ENCODE measurements at regions of chr17 and their contacts with region 1.

Region 1: GRCh38 chr17:17496189-17497064 is at the start of gene RASD1:
- DNase-seq: peak; percentile 81
- ATAC-seq: peak; percentile 88
- H3K4me3 Mint-ChIP-seq: peak within 1 kb of the TSS; percentile 80
- H3K27ac Mint-ChIP-seq: no peak within 1 kb of the TSS
- H3K4me1 Mint-ChIP-seq: peaks cover 17% of the 10 kb centered on the region
- H3K27me3 Mint-ChIP-seq: peaks cover 8% of the 10 kb centered on the region
- CTCF ChIP-seq: peak; percentile 67
- total RNA-seq, gene RASD1: 0.86 and 1.0 TPM in 2 replicates

Region 2: GRCh38 chr17:17425591-17425990 is 70.8 kb before region 1 on chr17:
- CTCF ChIA-PET with region 1: no interaction called
- POLR2A ChIA-PET with region 1: no interaction called
- intact Hi-C with region 1: no loop called
- DNase-seq: no peak
- ATAC-seq: no peak
- H3K4me3 Mint-ChIP-seq: no peak overlapping the region
- H3K27ac Mint-ChIP-seq: no peak overlapping the region
- H3K4me1 Mint-ChIP-seq: no peaks in the 10 kb centered on the region
- H3K27me3 Mint-ChIP-seq: no peaks in the 10 kb centered on the region
- CTCF ChIP-seq: no peak

Region 3: DNA sequence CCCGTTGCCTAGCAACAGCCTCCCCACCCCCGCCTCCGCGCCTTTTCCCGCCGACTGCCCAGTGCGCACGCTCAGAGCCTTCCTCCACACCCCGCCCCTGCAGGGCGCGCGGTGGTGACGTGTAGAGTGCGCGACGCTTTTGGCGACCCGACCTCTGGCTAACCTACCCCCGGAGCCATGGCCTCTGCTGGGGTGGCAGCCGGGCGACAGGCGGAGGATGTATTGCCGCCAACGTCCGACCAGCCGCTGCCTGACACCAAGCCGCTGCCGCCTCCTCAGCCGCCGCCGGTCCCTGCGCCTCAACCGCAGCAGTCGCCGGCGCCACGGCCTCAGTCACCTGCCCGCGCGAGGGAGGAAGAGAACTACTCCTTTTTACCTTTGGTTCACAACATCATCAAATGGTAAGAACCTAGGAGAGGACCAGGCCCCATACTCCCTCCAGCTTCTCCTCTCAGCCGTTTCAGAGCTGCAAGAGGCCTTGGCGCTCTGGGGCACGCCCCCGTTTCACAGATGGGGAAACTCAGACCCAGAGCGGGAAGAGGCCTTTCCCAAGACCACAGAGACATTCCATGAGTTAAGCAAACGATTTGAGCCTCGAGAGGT is 19.5 kb before region 1 on chr17 and contains the start of gene MED9:
- CTCF ChIA-PET with region 1: interaction called, 3 read pairs
- POLR2A ChIA-PET with region 1: no interaction called
- intact Hi-C with region 1: loop called (anchors 2 kb)
- DNase-seq: peak; percentile 93
- ATAC-seq: peak; percentile 100
- H3K4me3 Mint-ChIP-seq: peak within 1 kb of the TSS; percentile 90
- H3K27ac Mint-ChIP-seq: peak within 1 kb of the TSS; percentile 84
- H3K4me1 Mint-ChIP-seq: peaks cover 30% of the 10 kb centered on the region
- H3K27me3 Mint-ChIP-seq: no peaks in the 10 kb centered on the region
- CTCF ChIP-seq: no peak
- total RNA-seq, gene MED9: 16.2 and 20.1 TPM in 2 replicates

Region 4: GRCh38 chr17:17568749-17569195 is 72.3 kb after region 1 on chr17:
- CTCF ChIA-PET with region 1: interaction called, 5 read pairs
- POLR2A ChIA-PET with region 1: no interaction called
- intact Hi-C with region 1: loop called (anchors 10 kb)
- DNase-seq: peak; percentile 25
- ATAC-seq: peak; percentile 37
- H3K4me3 Mint-ChIP-seq: no peak overlapping the region
- H3K27ac Mint-ChIP-seq: no peak overlapping the region
- H3K4me1 Mint-ChIP-seq: no peaks in the 10 kb centered on the region
- H3K27me3 Mint-ChIP-seq: no peaks in the 10 kb centered on the region
- CTCF ChIP-seq: no peak

Region 5: GRCh38 chr17:17613708-17614114 is 117.3 kb after region 1 on chr17:
- CTCF ChIA-PET with region 1: interaction called, 16 read pairs
- POLR2A ChIA-PET with region 1: no interaction called
- intact Hi-C with region 1: loop called (anchors 1 kb)
- DNase-seq: no peak
- ATAC-seq: peak; percentile 91
- H3K4me3 Mint-ChIP-seq: no peak overlapping the region
- H3K27ac Mint-ChIP-seq: no peak overlapping the region
- H3K4me1 Mint-ChIP-seq: peaks cover 2% of the 10 kb centered on the region
- H3K27me3 Mint-ChIP-seq: peaks cover 3% of the 10 kb centered on the region
- CTCF ChIP-seq: no peak

Region 6: DNA sequence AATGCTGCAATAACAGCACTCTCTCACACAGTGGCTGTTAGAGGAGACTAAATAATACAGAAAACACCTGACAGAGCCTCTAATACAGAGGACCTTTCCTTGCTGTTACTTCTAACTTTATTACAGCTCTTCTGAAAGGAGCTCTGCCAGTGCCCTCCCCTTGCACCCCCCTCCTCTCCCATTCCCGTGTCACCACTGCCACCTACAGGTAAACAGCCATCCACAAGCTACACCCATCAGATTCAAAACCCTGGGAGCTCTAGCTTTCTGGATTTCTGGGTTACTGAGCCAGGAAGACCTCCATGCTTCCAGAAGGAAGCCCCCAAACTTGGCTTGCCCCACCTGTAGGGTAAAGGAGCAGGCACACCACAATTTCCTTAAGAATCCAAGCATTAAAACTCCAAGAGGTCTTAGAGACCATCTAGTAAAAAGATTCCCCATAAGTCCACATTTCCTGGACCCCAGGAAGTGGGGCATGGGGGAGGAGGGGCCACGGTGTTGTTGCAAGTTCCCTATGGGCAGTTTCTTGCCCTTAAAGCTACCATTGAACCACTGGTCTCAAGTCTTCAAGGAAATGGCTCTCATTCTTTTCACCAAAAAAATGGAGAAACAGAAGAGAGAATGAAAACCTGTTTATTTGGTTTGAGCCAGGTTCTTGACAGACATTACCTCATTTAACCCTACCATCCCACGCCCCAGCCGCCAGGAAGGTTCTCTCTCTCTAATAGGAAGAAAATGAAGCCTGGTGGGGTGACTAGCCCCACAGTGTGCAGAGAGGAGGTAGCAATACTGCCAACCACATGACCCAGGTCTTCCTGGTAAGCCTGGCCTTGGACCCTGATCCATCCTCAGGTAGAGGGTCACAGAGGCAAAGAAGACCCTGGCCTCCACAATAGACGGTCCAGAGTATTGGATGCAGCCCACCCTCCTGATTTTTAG is 423.0 kb after region 1 on chr17:
- CTCF ChIA-PET with region 1: interaction called, 28 read pairs
- POLR2A ChIA-PET with region 1: no interaction called
- intact Hi-C with region 1: loop called (anchors 1 kb)
- DNase-seq: peak; percentile 29
- ATAC-seq: peak; percentile 84
- H3K4me3 Mint-ChIP-seq: no peak overlapping the region
- H3K27ac Mint-ChIP-seq: no peak overlapping the region
- H3K4me1 Mint-ChIP-seq: no peaks in the 10 kb centered on the region
- H3K27me3 Mint-ChIP-seq: no peaks in the 10 kb centered on the region
- CTCF ChIP-seq: no peak

Measured in activated B cell treated with CpG ODN at 0.5 μM for 24 hours (primary cell).